Mammary epithelial cell (primary cell): ENCODE measurements at regions of chr7 and their contacts with region 1.

Region 1: GRCh38 chr7:74401137-74401859 is 52.4 kb upstream of the GTF2IRD1 start:
- DNase-seq: peak; percentile 42
- H3K4me3 ChIP-seq: no peak overlapping the region
- H3K27ac ChIP-seq: no peak overlapping the region
- H3K4me1 ChIP-seq: no peaks in the 10 kb centered on the region
- H3K27me3 ChIP-seq: no peaks in the 10 kb centered on the region
- CTCF ChIP-seq: peak; percentile 98

Region 2: GRCh38 chr7:74051629-74052410 is 349.5 kb before region 1 on chr7:
- CTCF ChIA-PET with region 1: no interaction called
- dilution Hi-C with region 1: no loop called
- in situ Hi-C with region 1: loop called in 1 of 2 experiments (anchors 25 kb)
- intact Hi-C with region 1: loop called (anchors 1 kb)
- DNase-seq: no peak
- H3K4me3 ChIP-seq: no peak overlapping the region
- H3K27ac ChIP-seq: no peak overlapping the region
- H3K4me1 ChIP-seq: no peaks in the 10 kb centered on the region
- H3K27me3 ChIP-seq: no peaks in the 10 kb centered on the region
- CTCF ChIP-seq: peak; percentile 41 to 47

Region 3: GRCh38 chr7:74061840-74062539 is 339.3 kb before region 1 on chr7:
- CTCF ChIA-PET with region 1: no interaction called
- dilution Hi-C with region 1: loop called (anchors 5 kb)
- in situ Hi-C with region 1: loop called in 1 of 2 experiments (anchors 25 kb)
- intact Hi-C with region 1: loop called (anchors 1 kb)
- DNase-seq: peak; percentile 84
- H3K4me3 ChIP-seq: no peak overlapping the region
- H3K27ac ChIP-seq: no peak overlapping the region
- H3K4me1 ChIP-seq: peaks cover 17% of the 10 kb centered on the region
- H3K27me3 ChIP-seq: no peaks in the 10 kb centered on the region
- CTCF ChIP-seq: no peak

Region 4: DNA sequence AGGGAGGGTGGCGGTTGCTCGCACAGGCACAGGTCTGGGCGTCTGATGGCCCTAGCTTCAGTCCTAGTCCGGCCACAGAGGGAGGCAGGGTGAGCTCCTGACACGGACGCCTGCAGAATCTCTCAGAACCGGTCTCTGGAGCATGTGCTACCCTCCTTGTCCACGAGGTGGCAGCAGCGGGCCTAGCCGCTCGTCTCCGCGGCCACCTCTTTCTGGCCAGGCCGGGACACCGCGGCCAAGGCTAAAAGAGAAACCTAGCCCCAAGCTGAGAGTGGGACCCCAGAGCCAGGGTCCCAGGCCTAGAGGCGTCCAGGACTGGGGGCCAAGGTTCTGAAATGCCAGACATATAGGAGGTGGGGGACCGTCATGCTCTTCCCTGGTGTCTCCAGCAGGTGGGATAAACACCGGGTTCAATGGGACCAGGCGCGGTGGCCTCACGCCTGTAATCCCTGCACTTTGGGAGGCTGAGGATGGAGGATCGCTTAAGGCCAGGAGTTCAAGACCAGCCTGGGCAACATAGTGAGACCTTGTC is 194.6 kb before region 1 on chr7:
- CTCF ChIA-PET with region 1: interaction called, 13 read pairs
- dilution Hi-C with region 1: no loop called
- in situ Hi-C with region 1: loop called in 1 of 2 experiments (anchors 5 kb)
- intact Hi-C with region 1: loop called (anchors 1 kb)
- DNase-seq: peak; percentile 52
- H3K4me3 ChIP-seq: peak overlapping the region in 1 of 3 experiments; percentile 20
- H3K27ac ChIP-seq: no peak overlapping the region
- H3K4me1 ChIP-seq: peaks cover 13% of the 10 kb centered on the region
- H3K27me3 ChIP-seq: no peaks in the 10 kb centered on the region
- CTCF ChIP-seq: peak; percentile 76 to 95

Region 5: DNA sequence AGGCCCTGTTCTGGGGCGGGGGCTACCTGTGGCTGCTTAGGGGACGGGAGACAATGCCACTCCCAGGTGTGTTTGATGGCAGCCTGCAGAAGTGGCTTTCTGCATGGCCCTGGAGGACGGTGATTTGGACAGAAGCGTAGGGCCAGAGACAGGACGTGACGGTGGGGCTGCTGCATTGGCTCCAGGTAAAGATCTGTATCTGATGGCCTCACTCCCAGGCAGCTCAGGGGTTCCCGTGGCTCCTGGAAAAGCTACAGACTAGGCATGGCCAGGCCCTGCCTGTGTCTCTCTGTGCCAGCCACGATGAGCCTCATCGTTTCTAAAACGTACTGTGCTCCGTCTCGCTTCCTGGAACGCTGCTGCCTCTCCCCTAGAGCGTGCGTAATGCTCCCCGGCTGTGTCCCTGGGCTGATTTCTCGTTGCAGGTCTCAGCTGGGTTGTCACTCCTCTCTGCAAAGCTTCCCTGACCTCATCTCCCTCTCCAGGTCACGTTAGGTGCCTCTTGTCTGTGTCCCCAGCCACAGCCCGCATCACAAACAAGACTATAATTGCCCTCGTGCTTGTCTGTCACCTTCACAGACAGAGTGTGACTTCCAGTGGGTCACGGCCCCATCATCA is 65.0 kb after region 1 on chr7:
- CTCF ChIA-PET with region 1: no interaction called
- dilution Hi-C with region 1: no loop called
- in situ Hi-C with region 1: no loop called
- intact Hi-C with region 1: no loop called
- DNase-seq: no peak
- H3K4me3 ChIP-seq: no peak overlapping the region
- H3K27ac ChIP-seq: no peak overlapping the region
- H3K4me1 ChIP-seq: no peaks in the 10 kb centered on the region
- H3K27me3 ChIP-seq: no peaks in the 10 kb centered on the region
- CTCF ChIP-seq: no peak

Region 6: DNA sequence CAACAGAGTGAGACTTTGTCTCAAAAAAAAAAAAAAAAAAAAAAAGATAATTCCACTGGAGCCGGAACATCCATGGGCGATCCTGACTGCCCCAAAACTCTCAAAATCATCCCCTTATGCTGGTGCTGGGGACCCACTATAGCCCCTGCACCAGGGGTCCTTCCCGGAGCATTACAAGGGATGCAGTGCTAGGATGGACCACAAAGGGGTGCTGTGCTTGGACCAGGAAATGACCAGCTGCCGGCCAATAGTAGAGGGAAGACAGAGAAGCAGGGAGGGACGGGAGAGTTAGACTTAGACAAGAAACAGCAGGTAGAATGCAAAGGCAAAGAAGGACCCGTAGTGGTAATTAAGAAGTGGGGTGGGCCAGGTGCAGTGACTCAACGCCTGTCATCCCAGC is 631.8 kb after region 1 on chr7:
- CTCF ChIA-PET with region 1: no interaction called
- dilution Hi-C with region 1: no loop called
- in situ Hi-C with region 1: loop called in 1 of 2 experiments (anchors 25 kb)
- intact Hi-C with region 1: no loop called
- DNase-seq: no peak
- H3K4me3 ChIP-seq: no peak overlapping the region
- H3K27ac ChIP-seq: no peak overlapping the region
- H3K4me1 ChIP-seq: no peaks in the 10 kb centered on the region
- H3K27me3 ChIP-seq: no peaks in the 10 kb centered on the region
- CTCF ChIP-seq: no peak